Panc1 (cell line): ENCODE measurements at regions of chr1 and their contacts with region 1.

Region 1: GRCh38 chr1:204446370-204447111 is 34.9 kb upstream of the PPP1R15B start:
- DNase-seq: no peak
- ATAC-seq: peak; percentile 88
- H3K4me3 ChIP-seq: no peak overlapping the region
- H3K27ac ChIP-seq: no peak overlapping the region
- H3K4me1 ChIP-seq: peaks cover 3% of the 10 kb centered on the region; the same call in 1 of the 2 replicates
- H3K27me3 ChIP-seq: no peaks in the 10 kb centered on the region
- CTCF ChIP-seq: peak; percentile 79

Region 2: GRCh38 chr1:204286831-204287421 is 159.6 kb before region 1 on chr1:
- CTCF ChIA-PET with region 1: no interaction called
- POLR2A ChIA-PET with region 1: no interaction called
- in situ Hi-C with region 1: no loop called
- intact Hi-C with region 1: no loop called
- DNase-seq: no peak
- ATAC-seq: no peak
- H3K4me3 ChIP-seq: no peak overlapping the region; a peak in 1 of 4 replicates
- H3K27ac ChIP-seq: no peak overlapping the region
- H3K4me1 ChIP-seq: peaks cover 5% of the 10 kb centered on the region; the same call in 1 of the 2 replicates
- H3K27me3 ChIP-seq: 0 out of 2 replicates have a peak, but pooled peaks cover 3% of the 10 kb centered on the region
- CTCF ChIP-seq: no peak

Region 3: GRCh38 chr1:204416331-204417230 is 30.0 kb before region 1 on chr1:
- CTCF ChIA-PET with region 1: interaction called, 4 read pairs
- POLR2A ChIA-PET with region 1: interaction called, 10 read pairs
- in situ Hi-C with region 1: no loop called
- intact Hi-C with region 1: no loop called
- DNase-seq: no peak
- ATAC-seq: peak; percentile 1; the same call in 1 of the 2 replicates
- H3K4me3 ChIP-seq: peak overlapping the region; percentile 24 to 48
- H3K27ac ChIP-seq: peak overlapping the region; percentile 96
- H3K4me1 ChIP-seq: peaks cover 56% of the 10 kb centered on the region
- H3K27me3 ChIP-seq: no peaks in the 10 kb centered on the region
- CTCF ChIP-seq: no peak

Region 4: GRCh38 chr1:204494281-204495077 is 47.9 kb after region 1 on chr1 and contains the start of gene PIK3C2B:
- CTCF ChIA-PET with region 1: interaction called, 15 read pairs
- POLR2A ChIA-PET with region 1: no interaction called
- in situ Hi-C with region 1: no loop called
- intact Hi-C with region 1: no loop called
- DNase-seq: no peak
- ATAC-seq: peak; percentile 97
- H3K4me3 ChIP-seq: peak within 1 kb of the TSS; percentile 80 to 91
- H3K27ac ChIP-seq: peak within 1 kb of the TSS; percentile 83
- H3K4me1 ChIP-seq: peaks cover 19% of the 10 kb centered on the region
- H3K27me3 ChIP-seq: no peaks in the 10 kb centered on the region
- CTCF ChIP-seq: peak; percentile 69
- total RNA-seq, gene PIK3C2B: 19.1 TPM

Region 5: DNA sequence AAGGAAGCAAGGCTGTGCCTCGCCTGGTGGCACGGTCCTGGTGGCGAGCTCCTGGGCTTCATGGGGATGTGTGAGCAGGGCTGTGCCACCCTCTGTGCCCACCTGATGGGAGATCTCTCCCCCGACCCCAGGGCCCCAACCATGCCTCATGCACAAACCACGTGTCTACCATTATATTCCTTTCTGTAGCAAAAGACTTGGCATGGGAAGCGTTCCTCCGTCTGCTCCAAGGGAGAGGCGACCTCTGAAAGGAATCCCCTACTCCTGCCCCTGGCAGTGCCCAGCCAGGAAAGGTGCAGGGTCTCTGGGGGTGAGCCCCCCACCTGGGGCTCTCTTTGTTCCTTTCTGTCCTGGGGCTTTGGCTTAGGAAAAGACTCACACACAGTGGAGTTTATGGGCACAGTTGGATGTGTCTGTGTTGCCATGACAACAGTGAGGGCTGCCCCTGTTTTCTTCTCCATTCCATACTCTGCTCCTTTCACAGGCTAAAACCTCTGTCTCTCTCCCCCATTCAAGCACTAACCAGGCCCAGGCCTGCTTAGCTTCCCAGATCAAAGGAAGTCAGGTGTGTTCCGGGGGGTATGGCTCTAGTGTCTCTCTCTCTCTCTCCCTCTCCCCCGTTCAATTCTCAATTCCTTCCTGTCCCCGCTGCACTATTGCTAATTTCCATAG is 260.4 kb after region 1 on chr1:
- CTCF ChIA-PET with region 1: no interaction called
- POLR2A ChIA-PET with region 1: no interaction called
- in situ Hi-C with region 1: no loop called
- intact Hi-C with region 1: no loop called
- DNase-seq: no peak
- ATAC-seq: no peak
- H3K4me3 ChIP-seq: no peak overlapping the region
- H3K27ac ChIP-seq: no peak overlapping the region
- H3K4me1 ChIP-seq: no peaks in the 10 kb centered on the region; the same call in 1 of the 2 replicates
- H3K27me3 ChIP-seq: no peaks in the 10 kb centered on the region
- CTCF ChIP-seq: no peak